HCT116 (cell line): ENCODE measurements at regions of chr6 and their contacts with region 1.

Region 1: DNA sequence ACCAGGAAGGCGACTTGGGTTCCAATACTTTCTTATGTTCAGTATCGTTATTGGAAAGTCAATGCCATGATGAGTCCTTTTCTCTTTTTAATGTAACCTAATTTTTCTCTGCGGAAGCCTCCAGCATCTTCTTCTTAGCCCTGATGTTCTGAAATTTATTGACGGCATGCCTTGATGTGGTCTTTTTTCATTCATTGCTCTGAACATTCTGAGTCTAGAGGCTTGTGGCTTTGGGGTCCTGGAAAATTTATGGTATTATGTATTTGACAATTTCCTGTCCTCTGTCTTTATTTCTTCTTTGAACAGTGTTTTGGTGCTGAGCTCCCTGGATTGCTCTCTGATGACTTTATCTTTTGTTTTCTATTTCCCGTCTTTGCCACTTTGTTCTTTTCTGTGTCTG is 28.7 kb upstream of the MAS1 start:
- DNase-seq: no peak
- ATAC-seq: no peak
- H3K4me3 ChIP-seq: no peak overlapping the region
- H3K27ac ChIP-seq: no peak overlapping the region
- H3K4me1 ChIP-seq: no peaks in the 10 kb centered on the region
- H3K27me3 ChIP-seq: peaks cover 4% of the 10 kb centered on the region; the same call in 1 of the 2 replicates
- CTCF ChIP-seq: no peak
- POLR2A ChIP-seq: no peak
- RAD21 ChIP-seq: no peak

Region 2: GRCh38 chr6:160088069-160088783 is 226.1 kb after region 1 on chr6:
- CTCF ChIA-PET with region 1: interaction called, 15 read pairs
- POLR2A ChIA-PET with region 1: no interaction called
- RAD21 ChIA-PET with region 1: interaction called in 1 of 2 experiments, 3 read pairs
- intact Hi-C with region 1: no loop called
- DNase-seq: peak; percentile 4
- ATAC-seq: peak; percentile 80
- H3K4me3 ChIP-seq: no peak overlapping the region
- H3K27ac ChIP-seq: no peak overlapping the region
- H3K4me1 ChIP-seq: no peaks in the 10 kb centered on the region
- H3K27me3 ChIP-seq: no peaks in the 10 kb centered on the region
- CTCF ChIP-seq: peak; percentile 39 to 73 (median 65); a peak in 5 of 6 replicates
- POLR2A ChIP-seq: no peak
- RAD21 ChIP-seq: peak; percentile 46

Region 3: GRCh38 chr6:160297310-160297709 is 435.2 kb after region 1 on chr6:
- CTCF ChIA-PET with region 1: interaction called, 9 read pairs
- POLR2A ChIA-PET with region 1: no interaction called
- RAD21 ChIA-PET with region 1: no interaction called
- intact Hi-C with region 1: loop called (anchors 5 kb)
- DNase-seq: no peak
- ATAC-seq: peak; percentile 79
- H3K4me3 ChIP-seq: no peak overlapping the region
- H3K27ac ChIP-seq: no peak overlapping the region
- H3K4me1 ChIP-seq: peaks cover 0 to 8% of the 10 kb centered on the region in 2 experiments; a peak in 2 of 4 replicates
- H3K27me3 ChIP-seq: no peaks in the 10 kb centered on the region
- CTCF ChIP-seq: peak; percentile 24 to 27 (median 26); a peak in 2 of 6 replicates
- POLR2A ChIP-seq: no peak
- RAD21 ChIP-seq: peak; percentile 55

Region 4: DNA sequence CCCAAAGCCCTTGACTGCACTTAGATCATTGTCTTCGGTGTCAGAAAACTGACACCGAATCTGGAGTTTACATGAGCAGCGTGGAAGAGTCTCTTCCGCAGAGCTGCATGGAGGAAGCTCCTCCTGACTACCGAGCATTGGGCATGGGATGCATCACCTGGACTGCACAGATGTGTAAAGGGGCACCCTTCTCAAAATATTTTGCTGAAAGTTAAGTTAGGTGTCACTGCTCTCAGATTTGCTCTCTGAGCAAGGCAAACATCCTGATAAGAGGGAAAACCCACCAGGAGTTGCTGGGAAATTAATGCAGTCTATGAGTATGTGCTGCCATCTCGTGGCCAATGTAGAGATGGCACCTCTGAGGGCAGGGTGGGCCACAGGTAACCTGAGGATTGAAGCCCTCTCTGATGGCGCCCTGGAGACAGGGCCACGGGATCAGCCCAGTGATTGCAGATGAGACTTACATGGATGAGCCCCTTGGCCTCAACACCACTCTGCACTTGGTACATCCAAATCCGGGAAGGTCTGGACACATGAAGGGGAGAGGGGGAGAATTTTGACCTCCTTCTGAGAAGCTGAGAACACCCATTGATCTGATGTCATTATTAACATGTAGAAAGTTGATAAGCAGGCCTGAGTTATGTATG is 672.1 kb after region 1 on chr6:
- CTCF ChIA-PET with region 1: interaction called, 4 read pairs
- POLR2A ChIA-PET with region 1: no interaction called
- RAD21 ChIA-PET with region 1: interaction called, 3 read pairs
- intact Hi-C with region 1: loop called (anchors 1 kb)
- DNase-seq: peak; percentile 18
- ATAC-seq: peak; percentile 88
- H3K4me3 ChIP-seq: no peak overlapping the region
- H3K27ac ChIP-seq: no peak overlapping the region
- H3K4me1 ChIP-seq: no peaks in the 10 kb centered on the region
- H3K27me3 ChIP-seq: 0 out of 2 replicates have a peak, but pooled peaks cover 4% of the 10 kb centered on the region
- CTCF ChIP-seq: peak; percentile 53 to 91 (median 79); a peak in 5 of 6 replicates
- POLR2A ChIP-seq: no peak
- RAD21 ChIP-seq: peak; percentile 76